Esophagus muscularis mucosa (tissue), 4 donors: ENCODE measurements at regions of chr17 and their contacts with region 1.

Region 1: DNA sequence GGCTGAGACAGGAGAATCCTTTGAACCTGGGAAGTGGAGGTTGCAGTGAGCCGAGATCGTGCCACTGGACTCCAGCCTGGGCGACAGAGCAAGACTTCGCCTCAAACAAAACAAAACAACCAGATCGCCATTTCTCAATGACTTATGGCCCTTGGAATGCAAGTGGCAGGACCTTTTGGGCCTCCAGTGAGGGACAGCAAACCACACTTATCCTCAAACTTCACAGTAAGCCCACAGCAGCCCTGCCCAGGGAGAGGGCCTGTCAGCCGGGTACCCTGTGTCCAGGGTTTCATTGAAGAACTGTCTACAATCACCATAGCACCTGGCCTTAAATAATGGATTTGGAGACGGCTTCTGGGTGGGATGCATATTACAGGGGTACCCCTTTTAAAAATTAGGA is 11.7 kb downstream of the TRAF4 start:
- DNase-seq: no peak
- H3K4me3 ChIP-seq: no peak overlapping the region
- H3K27ac ChIP-seq: no peak overlapping the region
- H3K4me1 ChIP-seq: peaks cover 2 to 7% (median 5%) of the 10 kb centered on the region in 4 donors
- H3K27me3 ChIP-seq: no peaks in the 10 kb centered on the region
- CTCF ChIP-seq: no peak
- EP300 ChIP-seq: no peak
- POLR2A ChIP-seq: no peak

Region 2: GRCh38 chr17:28896884-28897768 is 141.6 kb after region 1 on chr17 and contains the start of gene FLOT2:
- intact Hi-C with region 1: loop called (anchors 5 kb)
- DNase-seq: peak; percentile 93
- H3K4me3 ChIP-seq: peak within 1 kb of the TSS; percentile 78 to 94 (median 90)
- H3K27ac ChIP-seq: peak within 1 kb of the TSS; percentile 85 to 97 (median 94)
- H3K4me1 ChIP-seq: peaks cover 45 to 69% (median 57%) of the 10 kb centered on the region in 4 donors
- H3K27me3 ChIP-seq: no peaks in the 10 kb centered on the region
- CTCF ChIP-seq: peak; percentile 14 to 24 (median 18)
- EP300 ChIP-seq: peak; percentile 84
- POLR2A ChIP-seq: peak; percentile 9
- total RNA-seq, gene FLOT2: 60.2 to 94.8 (median 86.0) TPM